AG04450 (cell line): ENCODE measurements at regions of chr17 and their contacts with region 1.

Region 1: GRCh38 chr17:12256380-12256995 is 235.8 kb downstream of the MAP2K4 start:
- DNase-seq: peak; percentile 56
- H3K4me3 ChIP-seq: no peak overlapping the region
- H3K27ac ChIP-seq: no peak overlapping the region
- H3K27me3 ChIP-seq: no peaks in the 10 kb centered on the region
- CTCF ChIP-seq: peak; percentile 79

Region 2: GRCh38 chr17:12242345-12242954 is 14.0 kb before region 1 on chr17:
- CTCF ChIA-PET with region 1: interaction called, 13 read pairs
- POLR2A ChIA-PET with region 1: no interaction called
- DNase-seq: peak; percentile 8
- H3K4me3 ChIP-seq: no peak overlapping the region
- H3K27ac ChIP-seq: no peak overlapping the region
- H3K27me3 ChIP-seq: no peaks in the 10 kb centered on the region
- CTCF ChIP-seq: no peak